Activated CD4-positive, alpha-beta memory T cell treated with anti-CD3 and anti-CD28 coated beads for 36 hours (primary cell): ENCODE measurements at regions of chr11 and their contacts with region 1.

Region 1: GRCh38 chr11:2992234-2992996 is at the start of gene NAP1L4:
- DNase-seq: peak; percentile 98
- H3K4me3 Mint-ChIP-seq: peak within 1 kb of the TSS; percentile 99
- H3K27ac Mint-ChIP-seq: peak within 1 kb of the TSS; percentile 100
- H3K4me1 Mint-ChIP-seq: peaks cover 28% of the 10 kb centered on the region
- H3K27me3 Mint-ChIP-seq: no peaks in the 10 kb centered on the region
- total RNA-seq, gene NAP1L4: 261 to 263 TPM

Region 2: DNA sequence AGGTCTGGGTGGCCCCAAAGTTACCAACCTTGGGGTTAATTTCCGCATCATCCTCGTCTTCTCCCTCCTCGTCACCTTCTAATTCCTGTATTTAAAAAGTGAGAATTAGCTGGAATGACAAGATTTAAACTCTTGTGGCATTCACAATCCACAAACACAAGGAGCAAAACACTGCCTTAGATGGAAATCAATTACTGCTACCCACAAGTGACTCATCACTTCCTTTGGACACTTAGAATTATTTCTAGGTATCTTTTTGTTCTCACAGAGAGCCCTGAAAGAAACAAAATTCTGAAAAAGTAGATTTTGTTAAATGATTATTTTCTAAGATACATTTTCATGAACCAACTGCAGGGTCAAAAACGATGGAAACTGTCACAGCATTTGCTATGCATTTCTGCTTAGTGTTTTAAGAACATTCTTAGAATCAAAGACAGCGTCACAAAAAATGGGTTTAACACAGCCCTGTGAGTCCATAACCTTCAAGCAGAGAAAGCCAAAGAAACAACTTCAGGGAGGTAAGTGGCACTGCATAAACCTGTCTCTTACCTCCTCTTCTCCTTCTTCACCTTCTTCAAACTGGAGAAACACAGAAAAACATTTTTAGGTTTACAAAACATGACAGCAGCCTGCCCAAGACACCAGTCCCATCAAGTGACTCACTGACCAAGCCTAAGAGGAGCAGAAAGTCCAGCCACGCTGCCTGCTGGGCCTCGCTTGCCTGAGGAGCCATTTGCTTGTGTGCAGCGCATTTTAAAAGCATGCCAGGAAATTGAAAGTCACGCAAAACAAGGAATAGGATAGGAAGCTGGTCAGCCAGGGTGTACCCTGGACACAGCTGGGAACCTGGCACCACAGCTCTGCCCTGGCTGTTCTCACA is 40.9 kb before region 1 on chr11:
- CTCF ChIA-PET with region 1: no interaction called
- POLR2A ChIA-PET with region 1: no interaction called
- intact Hi-C with region 1: loop called (anchors 2 kb)
- DNase-seq: no peak
- H3K4me3 Mint-ChIP-seq: no peak overlapping the region
- H3K27ac Mint-ChIP-seq: peak overlapping the region; percentile 66
- H3K4me1 Mint-ChIP-seq: peaks cover 53% of the 10 kb centered on the region
- H3K27me3 Mint-ChIP-seq: no peaks in the 10 kb centered on the region

Region 3: DNA sequence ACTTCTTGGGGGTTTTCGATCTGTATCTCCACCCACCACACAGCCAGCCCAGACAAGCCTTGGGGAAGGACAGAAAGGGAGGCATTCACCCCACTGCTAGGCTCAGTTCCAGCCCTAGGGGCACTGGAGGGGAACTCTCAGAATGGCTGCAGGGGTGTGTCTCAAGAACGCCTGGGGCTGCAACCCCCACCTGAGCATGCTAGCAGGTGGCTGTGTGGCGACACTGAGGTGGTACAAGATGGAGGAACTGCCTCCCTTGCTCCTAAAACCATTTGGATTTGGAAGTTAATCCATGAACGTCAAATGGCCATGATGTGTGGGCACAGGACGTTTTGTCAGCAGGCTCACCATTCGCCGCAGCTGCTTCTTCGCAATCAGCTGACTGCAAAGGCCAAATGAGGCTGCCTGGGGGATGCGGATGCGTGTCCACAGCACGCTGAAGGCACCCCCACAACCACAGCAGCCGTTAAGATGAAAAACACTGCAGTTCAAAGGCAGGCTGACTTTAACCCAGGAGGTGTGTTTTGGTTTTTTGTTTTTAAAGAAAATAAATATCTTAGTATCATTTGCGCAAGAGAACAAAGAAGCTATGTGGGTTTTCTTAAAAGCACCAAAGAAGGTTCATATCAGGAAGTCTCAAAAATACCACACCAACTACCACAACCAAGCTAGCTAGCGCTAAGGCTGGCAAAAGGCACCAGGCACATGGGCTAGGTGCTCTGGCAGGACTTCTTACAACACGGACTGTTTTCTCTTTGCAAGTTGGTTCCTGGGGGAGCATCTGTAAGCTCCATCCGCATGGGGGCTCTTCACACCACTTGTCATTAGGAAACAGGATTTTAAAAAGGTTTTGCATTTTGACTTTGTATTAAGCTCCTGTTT is 21.9 kb after region 1 on chr11:
- CTCF ChIA-PET with region 1: interaction called, 6 read pairs
- POLR2A ChIA-PET with region 1: interaction called, 53 read pairs
- intact Hi-C with region 1: loop called (anchors 1 kb)
- DNase-seq: peak; percentile 82
- H3K4me3 Mint-ChIP-seq: no peak overlapping the region
- H3K27ac Mint-ChIP-seq: peak overlapping the region; percentile 77
- H3K4me1 Mint-ChIP-seq: peaks cover 55% of the 10 kb centered on the region
- H3K27me3 Mint-ChIP-seq: no peaks in the 10 kb centered on the region

Region 4: GRCh38 chr11:3123761-3124733 is 131.6 kb after region 1 on chr11:
- CTCF ChIA-PET with region 1: no interaction called
- POLR2A ChIA-PET with region 1: no interaction called
- intact Hi-C with region 1: no loop called
- DNase-seq: no peak
- H3K4me3 Mint-ChIP-seq: no peak overlapping the region
- H3K27ac Mint-ChIP-seq: no peak overlapping the region
- H3K4me1 Mint-ChIP-seq: no peaks in the 10 kb centered on the region
- H3K27me3 Mint-ChIP-seq: no peaks in the 10 kb centered on the region

Region 5: GRCh38 chr11:3378426-3379423 is 386.3 kb after region 1 on chr11 and contains the start of gene ZNF195:
- CTCF ChIA-PET with region 1: interaction called, 3 read pairs
- POLR2A ChIA-PET with region 1: interaction called, 4 read pairs
- intact Hi-C with region 1: loop called (anchors 2 kb)
- DNase-seq: peak; percentile 100
- H3K4me3 Mint-ChIP-seq: peak within 1 kb of the TSS; percentile 90
- H3K27ac Mint-ChIP-seq: peak within 1 kb of the TSS; percentile 95
- H3K4me1 Mint-ChIP-seq: peaks cover 45% of the 10 kb centered on the region
- H3K27me3 Mint-ChIP-seq: no peaks in the 10 kb centered on the region
- total RNA-seq, gene ZNF195: 33.8 to 34.3 TPM